ENCODE measurements at regions of chr6 and their contacts with region 1.

Region 1: GRCh38 chr6:35624341-35625070 is 64.2 kb downstream of the FKBP5 start:
- DNase-seq: peak; percentile 44
- ATAC-seq: peak; percentile 65
- H3K4me3 ChIP-seq: no peak overlapping the region
- H3K27ac ChIP-seq: no peak overlapping the region
- H3K4me1 ChIP-seq: peaks cover 1% of the 10 kb centered on the region; the same call in 1 of the 2 replicates
- H3K27me3 ChIP-seq: no peaks in the 10 kb centered on the region
- CTCF ChIP-seq: peak; percentile 65

Region 2: GRCh38 chr6:35681298-35681697 is 56.8 kb after region 1 on chr6:
- CTCF ChIA-PET with region 1: no interaction called
- POLR2A ChIA-PET with region 1: no interaction called
- intact Hi-C with region 1: loop called (anchors 5 kb)
- DNase-seq: no peak
- ATAC-seq: no peak
- H3K4me3 ChIP-seq: no peak overlapping the region
- H3K27ac ChIP-seq: no peak overlapping the region
- H3K4me1 ChIP-seq: no peaks in the 10 kb centered on the region
- H3K27me3 ChIP-seq: no peaks in the 10 kb centered on the region
- CTCF ChIP-seq: no peak

Region 3: GRCh38 chr6:35736253-35736894 is 111.9 kb after region 1 on chr6:
- CTCF ChIA-PET with region 1: interaction called, 8 read pairs
- POLR2A ChIA-PET with region 1: no interaction called
- intact Hi-C with region 1: loop called (anchors 1 kb)
- DNase-seq: peak; percentile 81
- ATAC-seq: peak; percentile 14; the same call in 1 of the 2 replicates
- H3K4me3 ChIP-seq: no peak overlapping the region
- H3K27ac ChIP-seq: no peak overlapping the region
- H3K4me1 ChIP-seq: peaks cover 7% of the 10 kb centered on the region
- H3K27me3 ChIP-seq: no peaks in the 10 kb centered on the region
- CTCF ChIP-seq: peak; percentile 93